ENCODE measurements at regions of chr15 and their contacts with region 1.

Region 1: GRCh38 chr15:81000624-81001151 is at the start of gene TLNRD1:
- DNase-seq: peak; percentile 63 to 90 (median 79)
- ATAC-seq: peak; percentile 81
- H3K4me3 ChIP-seq: peak within 1 kb of the TSS; percentile 83
- H3K4me3 Mint-ChIP-seq: peak within 1 kb of the TSS; percentile 91 to 99 (median 96)
- H3K27ac ChIP-seq: peak within 1 kb of the TSS; percentile 91
- H3K27ac Mint-ChIP-seq: peak within 1 kb of the TSS; percentile 94 to 98 (median 97)
- H3K4me1 ChIP-seq: peaks cover 24 to 36% of the 10 kb centered on the region in 2 donors
- H3K4me1 Mint-ChIP-seq: peaks cover 24 to 66% (median 56%) of the 10 kb centered on the region in 7 donors
- H3K27me3 ChIP-seq: no peaks in the 10 kb centered on the region
- H3K27me3 Mint-ChIP-seq: no peaks in the 10 kb centered on the region
- total RNA-seq, gene TLNRD1: 11.5 to 33.0 (median 22.5) TPM

Region 2: GRCh38 chr15:80695104-80695910 is 305.4 kb before region 1 on chr15 and contains the start of gene ABHD17C:
- CTCF ChIA-PET with region 1: no interaction called
- POLR2A ChIA-PET with region 1: no interaction called
- intact Hi-C with region 1: loop called in 1 of 2 experiments (anchors 10 kb)
- DNase-seq: peak in 7 of 9 donors; percentile 20 to 71 (median 29)
- ATAC-seq: peak; percentile 79
- H3K4me3 ChIP-seq: peak within 1 kb of the TSS; percentile 70
- H3K4me3 Mint-ChIP-seq: peak within 1 kb of the TSS; percentile 91 to 98 (median 94)
- H3K27ac ChIP-seq: peak within 1 kb of the TSS; percentile 33
- H3K27ac Mint-ChIP-seq: peak within 1 kb of the TSS; percentile 62 to 84 (median 71)
- H3K4me1 ChIP-seq: peaks cover 8 to 13% of the 10 kb centered on the region in 2 donors
- H3K4me1 Mint-ChIP-seq: peaks cover 11 to 23% (median 18%) of the 10 kb centered on the region in 7 donors
- H3K27me3 ChIP-seq: no peaks in the 10 kb centered on the region
- H3K27me3 Mint-ChIP-seq: peaks cover 0 to 56% (median 0%) of the 10 kb centered on the region in 5 donors
- total RNA-seq, gene ABHD17C: 1.3 to 2.8 (median 1.9) TPM

Region 3: GRCh38 chr15:81106560-81106959 is 105.9 kb after region 1 on chr15:
- CTCF ChIA-PET with region 1: interaction called, 3 read pairs
- POLR2A ChIA-PET with region 1: no interaction called
- intact Hi-C with region 1: loop called (anchors 1 kb)
- DNase-seq: peak in 8 of 9 donors; percentile 2 to 43 (median 31)
- ATAC-seq: peak; percentile 54
- H3K4me3 ChIP-seq: no peak overlapping the region
- H3K4me3 Mint-ChIP-seq: no peak overlapping the region
- H3K27ac ChIP-seq: no peak overlapping the region
- H3K27ac Mint-ChIP-seq: peak overlapping the region in 1 of 9 donors; percentile 73
- H3K4me1 ChIP-seq: no peaks in the 10 kb centered on the region
- H3K4me1 Mint-ChIP-seq: peaks cover 0 to 12% (median 0%) of the 10 kb centered on the region in 7 donors
- H3K27me3 ChIP-seq: no peaks in the 10 kb centered on the region
- H3K27me3 Mint-ChIP-seq: peaks cover 11 to 66% (median 20%) of the 10 kb centered on the region in 5 donors

Region 4: DNA sequence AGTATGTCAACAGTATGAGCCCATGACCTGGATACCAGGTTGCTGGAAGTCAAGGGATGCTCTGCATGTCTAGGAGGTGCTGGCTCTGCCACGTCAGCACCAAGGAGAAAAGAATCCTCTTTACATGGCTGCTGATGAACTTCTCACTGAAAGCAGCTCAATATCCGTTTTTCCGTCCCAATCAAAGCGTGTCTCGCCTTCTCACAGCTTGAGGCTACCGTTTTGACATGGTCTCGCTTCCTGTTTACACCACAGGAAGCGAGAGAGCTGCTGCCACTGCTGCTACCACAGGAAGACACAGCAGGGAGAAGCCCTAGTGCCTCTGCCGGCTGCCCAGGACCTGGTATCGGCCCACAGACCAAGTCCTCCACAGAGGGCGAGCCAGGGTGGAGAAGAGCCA is 296.0 kb after region 1 on chr15:
- CTCF ChIA-PET with region 1: no interaction called
- POLR2A ChIA-PET with region 1: interaction called, 17 read pairs
- intact Hi-C with region 1: loop called (anchors 1 kb)
- DNase-seq: peak; percentile 38 to 87 (median 81)
- ATAC-seq: peak; percentile 69
- H3K4me3 ChIP-seq: peak overlapping the region; percentile 74
- H3K4me3 Mint-ChIP-seq: peak overlapping the region; percentile 80 to 100 (median 98)
- H3K27ac ChIP-seq: peak overlapping the region; percentile 87
- H3K27ac Mint-ChIP-seq: peak overlapping the region; percentile 93 to 100 (median 96)
- H3K4me1 ChIP-seq: peaks cover 52 to 59% of the 10 kb centered on the region in 2 donors
- H3K4me1 Mint-ChIP-seq: peaks cover 34 to 66% (median 64%) of the 10 kb centered on the region in 7 donors
- H3K27me3 ChIP-seq: no peaks in the 10 kb centered on the region
- H3K27me3 Mint-ChIP-seq: no peaks in the 10 kb centered on the region

Region 5: DNA sequence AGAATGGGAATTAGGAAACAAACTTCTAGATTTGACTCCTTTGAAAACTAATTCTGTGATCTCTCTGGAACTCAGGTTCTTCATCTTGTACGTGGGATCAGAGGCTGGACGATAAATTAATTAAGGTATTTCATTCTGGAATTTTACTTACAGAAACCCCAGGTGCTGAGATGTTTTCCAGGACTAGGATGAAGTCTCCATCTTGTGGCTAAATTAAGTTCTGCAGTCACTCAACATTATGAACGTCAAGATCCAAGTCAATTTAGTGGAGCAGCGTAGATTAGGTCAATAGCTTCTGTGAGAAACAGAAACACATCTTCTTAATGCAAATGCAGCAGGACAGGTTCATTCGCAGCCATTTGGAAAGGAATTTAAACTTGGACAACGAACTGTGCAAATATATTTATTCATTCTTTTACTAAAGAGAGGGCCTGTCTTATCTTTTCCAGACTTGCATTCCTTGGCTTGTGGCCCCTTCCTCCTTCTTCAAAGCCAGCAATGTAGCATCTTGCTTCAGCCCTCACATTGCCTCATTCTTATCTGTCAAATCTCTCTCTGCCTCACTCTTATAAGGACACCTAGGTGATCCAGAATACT is 400.1 kb after region 1 on chr15:
- CTCF ChIA-PET with region 1: no interaction called
- POLR2A ChIA-PET with region 1: no interaction called
- intact Hi-C with region 1: loop called in 1 of 2 experiments (anchors 10 kb)
- DNase-seq: peak in 6 of 9 donors; percentile 20 to 59 (median 52)
- ATAC-seq: peak; percentile 67
- H3K4me3 ChIP-seq: no peak overlapping the region
- H3K4me3 Mint-ChIP-seq: no peak overlapping the region
- H3K27ac ChIP-seq: no peak overlapping the region
- H3K27ac Mint-ChIP-seq: no peak overlapping the region
- H3K4me1 ChIP-seq: no peaks in the 10 kb centered on the region
- H3K4me1 Mint-ChIP-seq: peaks cover 0 to 5% (median 1%) of the 10 kb centered on the region in 7 donors
- H3K27me3 ChIP-seq: peaks cover 0 to 3% of the 10 kb centered on the region in 2 donors
- H3K27me3 Mint-ChIP-seq: peaks cover 0 to 15% (median 0%) of the 10 kb centered on the region in 5 donors

Measured in naive thymus-derived CD4-positive, alpha-beta T cell (primary cell).